ENCODE measurements at regions of chr6 and their contacts with region 1.

Region 1: GRCh38 chr6:136643850-136644596 is 93.8 kb upstream of the MAP7 start:
- DNase-seq: peak; percentile 88
- H3K4me3 Mint-ChIP-seq: no peak overlapping the region
- H3K27ac Mint-ChIP-seq: no peak overlapping the region
- H3K4me1 Mint-ChIP-seq: peaks cover 7% of the 10 kb centered on the region
- H3K27me3 Mint-ChIP-seq: no peaks in the 10 kb centered on the region

Region 2: DNA sequence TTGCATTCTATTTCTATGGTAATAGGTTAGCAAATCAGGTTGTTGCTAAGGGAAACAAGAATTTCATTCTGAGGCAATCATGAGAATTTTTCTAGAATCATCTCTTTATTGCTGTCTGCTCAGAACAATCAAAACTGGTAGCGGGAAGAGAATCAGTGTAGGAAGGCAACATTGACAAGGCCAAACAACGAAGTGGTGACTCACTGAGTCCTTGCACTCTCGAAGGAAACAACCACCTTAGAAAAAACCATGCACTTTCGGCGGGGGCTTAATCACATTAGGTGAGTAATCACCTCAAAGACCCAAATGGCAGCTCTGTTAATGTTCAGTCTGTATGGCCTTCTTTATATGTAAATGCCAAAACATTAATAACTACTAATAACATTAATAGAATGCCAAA is 15.0 kb before region 1 on chr6:
- CTCF ChIA-PET with region 1: interaction called, 18 read pairs
- DNase-seq: no peak
- H3K4me3 Mint-ChIP-seq: no peak overlapping the region
- H3K27ac Mint-ChIP-seq: no peak overlapping the region
- H3K4me1 Mint-ChIP-seq: peaks cover 11% of the 10 kb centered on the region
- H3K27me3 Mint-ChIP-seq: no peaks in the 10 kb centered on the region

Region 3: GRCh38 chr6:136657666-136658065 is 13.6 kb after region 1 on chr6:
- CTCF ChIA-PET with region 1: interaction called, 12 read pairs
- DNase-seq: no peak
- H3K4me3 Mint-ChIP-seq: no peak overlapping the region
- H3K27ac Mint-ChIP-seq: no peak overlapping the region
- H3K4me1 Mint-ChIP-seq: peaks cover 8% of the 10 kb centered on the region
- H3K27me3 Mint-ChIP-seq: no peaks in the 10 kb centered on the region

Region 4: DNA sequence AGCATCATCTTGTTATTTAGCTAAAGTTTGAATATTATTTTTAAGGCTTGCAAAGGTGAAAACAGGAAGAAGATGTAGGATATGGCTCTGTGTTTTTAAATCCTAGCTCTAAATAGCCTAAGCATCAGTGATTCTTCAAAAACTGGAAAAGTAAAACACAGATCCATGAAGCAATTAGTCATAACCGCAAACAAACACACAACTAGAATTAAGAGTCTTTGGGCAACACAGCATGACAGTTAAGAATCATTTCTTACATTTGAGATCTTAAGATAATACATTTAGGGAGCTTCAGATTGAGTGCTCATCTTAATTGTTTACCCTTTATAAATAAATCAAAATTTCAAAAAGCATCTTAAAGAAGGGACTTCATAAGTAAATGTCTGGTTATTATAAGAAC is 22.0 kb after region 1 on chr6:
- CTCF ChIA-PET with region 1: interaction called, 12 read pairs
- DNase-seq: no peak
- H3K4me3 Mint-ChIP-seq: no peak overlapping the region
- H3K27ac Mint-ChIP-seq: no peak overlapping the region
- H3K4me1 Mint-ChIP-seq: no peaks in the 10 kb centered on the region
- H3K27me3 Mint-ChIP-seq: no peaks in the 10 kb centered on the region

Region 5: DNA sequence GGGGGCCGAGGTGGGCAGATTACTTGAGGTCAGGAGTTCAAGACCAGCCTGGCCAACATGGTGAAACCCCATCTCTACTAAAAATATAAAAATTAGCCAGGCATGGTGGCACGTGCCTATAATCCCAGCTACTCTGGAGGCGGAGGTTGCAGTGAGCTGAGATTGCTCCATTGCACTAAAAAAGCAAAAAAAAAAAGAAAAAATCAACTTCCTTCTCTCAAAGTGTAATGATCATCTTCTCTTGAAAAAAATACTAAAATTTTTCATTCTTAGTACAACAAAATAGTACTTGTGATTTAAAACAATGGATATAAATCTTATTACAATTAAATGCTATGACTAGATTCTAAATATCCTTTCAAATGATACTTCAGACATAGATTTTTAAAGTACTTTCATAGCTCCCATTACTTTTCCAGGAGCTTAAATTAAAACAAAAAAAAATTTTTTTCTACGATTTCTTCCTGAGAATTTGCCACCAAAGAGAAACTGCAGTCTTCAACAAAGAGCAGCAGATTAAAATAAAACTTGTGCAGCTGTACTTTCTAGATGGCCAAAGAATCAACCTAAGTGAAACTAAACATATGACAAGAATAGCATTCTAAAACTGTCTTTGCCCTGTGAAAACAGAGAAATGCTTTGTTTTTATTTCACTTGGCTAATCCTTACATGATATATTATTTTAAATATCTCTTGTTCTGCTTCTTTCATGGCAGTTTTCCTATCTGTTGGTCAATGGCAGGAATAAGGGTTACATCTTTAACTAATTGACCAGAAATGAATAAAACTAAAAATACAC is 73.1 kb after region 1 on chr6:
- CTCF ChIA-PET with region 1: interaction called, 14 read pairs
- DNase-seq: no peak
- H3K4me3 Mint-ChIP-seq: no peak overlapping the region
- H3K27ac Mint-ChIP-seq: no peak overlapping the region
- H3K4me1 Mint-ChIP-seq: peaks cover 46% of the 10 kb centered on the region
- H3K27me3 Mint-ChIP-seq: no peaks in the 10 kb centered on the region

Region 6: GRCh38 chr6:136751522-136751956 is 107.5 kb after region 1 on chr6:
- CTCF ChIA-PET with region 1: interaction called, 17 read pairs
- DNase-seq: peak; percentile 61
- H3K4me3 Mint-ChIP-seq: peak overlapping the region; percentile 55
- H3K27ac Mint-ChIP-seq: peak overlapping the region; percentile 92
- H3K4me1 Mint-ChIP-seq: peaks cover 94% of the 10 kb centered on the region
- H3K27me3 Mint-ChIP-seq: no peaks in the 10 kb centered on the region